A549 (cell line): ENCODE measurements at regions of chr11 and their contacts with region 1.

Region 1: DNA sequence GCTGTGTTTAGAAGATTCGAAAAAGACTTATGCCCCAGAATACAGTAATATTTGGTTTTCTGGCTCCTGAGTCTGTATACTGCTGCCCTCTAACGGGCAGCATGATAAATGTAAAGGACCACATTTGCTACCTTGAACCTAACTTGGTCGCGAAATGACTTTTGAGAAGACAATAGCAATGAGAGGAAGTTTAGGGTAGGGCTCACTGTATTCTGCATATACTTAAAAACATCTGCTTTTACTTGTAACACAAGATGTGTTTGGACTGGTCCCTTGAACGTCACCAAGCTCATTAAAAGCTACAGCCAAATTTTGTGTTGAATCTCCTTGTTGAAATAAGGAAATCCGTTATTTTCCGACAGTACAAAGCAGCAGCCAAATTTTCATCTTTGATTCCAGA is 309.1 kb downstream of the SWAP70 start:
- DNase-seq: peak; percentile 63
- ATAC-seq: peak; percentile 56 to 73; a peak in 4 of 6 replicates
- H3K4me3 ChIP-seq: no peak overlapping the region
- H3K27ac ChIP-seq: peak overlapping the region; percentile 12 to 56; a peak in 3 of 6 replicates
- H3K4me1 ChIP-seq: peaks cover 39% of the 10 kb centered on the region
- CTCF ChIP-seq: peak; percentile 89
- EP300 ChIP-seq: no peak
- POLR2A ChIP-seq: no peak
- RAD21 ChIP-seq: peak; percentile 89 to 91

Region 2: GRCh38 chr11:9765320-9766020 is 207.5 kb before region 1 on chr11:
- CTCF ChIA-PET with region 1: interaction called, 53 read pairs
- POLR2A ChIA-PET with region 1: no interaction called
- DNase-seq: no peak
- ATAC-seq: peak in 1 of 2 experiments; percentile 21; a peak in 2 of 6 replicates
- H3K4me3 ChIP-seq: no peak overlapping the region
- H3K27ac ChIP-seq: peak overlapping the region in 1 of 2 experiments; percentile 63; a peak in 3 of 6 replicates
- H3K4me1 ChIP-seq: peaks cover 8% of the 10 kb centered on the region
- CTCF ChIP-seq: no peak
- EP300 ChIP-seq: no peak
- POLR2A ChIP-seq: no peak
- RAD21 ChIP-seq: no peak

Region 3: DNA sequence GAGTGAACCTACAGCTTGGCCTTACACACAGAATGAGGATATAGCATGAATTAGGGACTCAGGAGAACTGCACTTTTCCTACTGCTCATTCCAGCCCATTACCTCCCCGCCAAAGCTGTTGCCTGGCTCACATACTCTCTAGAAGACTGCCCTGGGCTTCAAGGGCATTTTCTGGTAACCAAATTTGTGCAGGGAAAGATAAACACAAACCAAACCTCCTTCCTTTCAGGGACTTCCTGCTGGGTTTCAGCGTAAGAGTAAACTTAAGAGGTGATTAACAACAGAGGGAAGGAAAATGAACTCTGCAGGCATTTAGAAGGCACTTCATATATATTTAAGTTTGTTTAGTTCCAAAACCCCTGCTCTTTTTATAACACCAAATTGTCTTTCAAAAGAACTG is 114.2 kb before region 1 on chr11:
- CTCF ChIA-PET with region 1: interaction called, 24 read pairs
- POLR2A ChIA-PET with region 1: no interaction called
- DNase-seq: peak in 1 of 2 experiments; percentile 32
- ATAC-seq: peak in 1 of 2 experiments; percentile 59; a peak in 3 of 6 replicates
- H3K4me3 ChIP-seq: no peak overlapping the region
- H3K27ac ChIP-seq: peak overlapping the region; percentile 60 to 85
- H3K4me1 ChIP-seq: peaks cover 73% of the 10 kb centered on the region
- CTCF ChIP-seq: no peak
- EP300 ChIP-seq: no peak
- POLR2A ChIP-seq: no peak
- RAD21 ChIP-seq: no peak

Region 4: DNA sequence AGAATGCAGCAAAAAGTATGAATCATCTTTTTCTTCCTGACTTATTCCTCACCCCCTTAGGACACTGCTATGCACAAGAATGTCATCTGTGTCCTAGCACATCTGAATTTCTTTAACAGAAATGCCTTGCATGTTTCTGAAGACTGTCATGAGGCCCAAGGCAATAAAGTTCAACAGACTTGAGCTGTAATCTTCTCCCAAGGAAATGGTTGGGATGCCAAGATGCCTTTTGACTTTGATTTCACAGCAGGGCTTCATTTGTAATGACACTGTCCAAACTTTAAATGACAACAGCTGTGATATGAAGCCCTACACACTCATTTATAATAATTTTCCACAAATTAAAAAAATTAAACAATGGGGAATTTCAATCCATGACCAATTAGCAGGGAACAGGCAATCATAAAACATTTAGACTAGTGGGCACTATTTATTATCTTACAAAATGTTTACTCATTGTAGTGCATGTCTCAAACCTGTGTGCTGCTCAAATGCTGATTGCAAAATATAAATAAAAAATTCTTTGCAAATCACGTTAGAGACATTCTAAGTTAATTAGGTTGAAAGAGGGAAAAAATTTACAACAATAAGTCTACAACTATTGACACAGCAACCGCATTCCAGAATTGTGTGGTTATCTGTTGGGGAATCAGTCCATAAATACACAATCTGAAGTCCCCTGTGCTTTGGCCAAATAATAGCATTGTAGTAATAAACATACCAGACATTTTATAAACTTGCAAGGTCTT is 66.8 kb before region 1 on chr11:
- CTCF ChIA-PET with region 1: interaction called, 16 read pairs
- POLR2A ChIA-PET with region 1: interaction called, 3 read pairs
- DNase-seq: peak; percentile 80 to 96
- ATAC-seq: peak; percentile 97 to 98
- H3K4me3 ChIP-seq: 0 out of 3 replicates have a peak overlapping the region, but pooled peaks have one; percentile 5
- H3K27ac ChIP-seq: peak overlapping the region; percentile 81 to 92
- H3K4me1 ChIP-seq: peaks cover 50% of the 10 kb centered on the region
- CTCF ChIP-seq: no peak
- EP300 ChIP-seq: peak; percentile 78 to 93; a peak in 4 of 5 replicates
- POLR2A ChIP-seq: no peak
- RAD21 ChIP-seq: peak; percentile 31 to 42; a peak in 3 of 5 replicates

Region 5: GRCh38 chr11:9951714-9952275 is 21.2 kb before region 1 on chr11:
- CTCF ChIA-PET with region 1: interaction called, 10 read pairs
- POLR2A ChIA-PET with region 1: no interaction called
- DNase-seq: no peak
- ATAC-seq: no peak
- H3K4me3 ChIP-seq: no peak overlapping the region
- H3K27ac ChIP-seq: peak overlapping the region in 1 of 2 experiments; percentile 25; a peak in 2 of 6 replicates
- H3K4me1 ChIP-seq: peaks cover 17% of the 10 kb centered on the region
- CTCF ChIP-seq: no peak
- EP300 ChIP-seq: no peak
- POLR2A ChIP-seq: no peak
- RAD21 ChIP-seq: no peak

Region 6: GRCh38 chr11:9962722-9963121 is 10.3 kb before region 1 on chr11:
- CTCF ChIA-PET with region 1: interaction called, 13 read pairs
- POLR2A ChIA-PET with region 1: no interaction called
- DNase-seq: no peak
- ATAC-seq: no peak
- H3K4me3 ChIP-seq: no peak overlapping the region
- H3K27ac ChIP-seq: no peak overlapping the region; a peak in 1 of 6 replicates
- H3K4me1 ChIP-seq: no peaks in the 10 kb centered on the region
- CTCF ChIP-seq: no peak
- EP300 ChIP-seq: no peak
- POLR2A ChIP-seq: no peak
- RAD21 ChIP-seq: no peak

Region 7: DNA sequence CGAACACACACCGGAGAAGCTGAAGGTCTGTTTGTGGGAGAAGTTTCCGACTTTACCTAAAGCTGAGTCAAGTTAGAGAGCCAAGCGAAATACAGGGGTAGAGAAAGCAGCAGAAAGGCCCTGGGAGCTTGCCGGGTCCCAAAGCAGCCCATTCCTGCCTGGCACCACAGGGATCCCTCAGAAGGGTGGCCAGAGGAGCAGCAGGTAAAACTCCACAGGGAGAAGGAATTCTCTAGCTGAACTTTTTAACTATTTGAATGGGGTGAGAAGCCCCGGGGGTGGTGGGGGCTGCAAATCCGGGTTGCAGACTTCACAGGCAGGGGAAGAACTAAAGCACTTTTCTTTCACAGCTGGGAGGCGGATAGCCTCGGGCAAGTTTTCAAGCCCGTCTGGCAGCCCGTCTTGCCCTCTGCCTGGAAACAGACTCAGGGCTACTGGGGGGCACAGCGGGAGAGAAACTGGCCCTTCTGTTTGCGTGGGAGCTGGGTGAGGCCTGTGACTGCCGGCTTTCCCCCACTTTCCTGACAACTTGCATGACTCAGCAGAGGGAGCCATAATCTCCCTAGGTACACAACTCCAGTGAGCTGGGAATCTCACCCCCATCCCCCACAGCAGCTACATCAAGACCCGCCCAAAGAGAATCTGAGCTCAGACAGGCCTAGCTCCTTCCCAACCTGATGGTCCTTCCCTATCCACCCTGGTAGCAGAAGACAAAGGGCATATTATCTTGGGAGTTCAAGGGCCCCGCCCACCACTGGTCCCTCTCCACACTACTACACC is 10.0 kb after region 1 on chr11:
- CTCF ChIA-PET with region 1: interaction called, 39 read pairs
- POLR2A ChIA-PET with region 1: no interaction called
- DNase-seq: peak; percentile 32 to 97
- ATAC-seq: peak; percentile 83 to 91
- H3K4me3 ChIP-seq: peak overlapping the region; percentile 19; the same call in 1 of the 3 replicates
- H3K27ac ChIP-seq: peak overlapping the region; percentile 95
- H3K4me1 ChIP-seq: peaks cover 37% of the 10 kb centered on the region
- CTCF ChIP-seq: no peak
- EP300 ChIP-seq: peak in 1 of 2 experiments; percentile 77; a peak in 3 of 5 replicates
- POLR2A ChIP-seq: no peak
- RAD21 ChIP-seq: peak; percentile 33 to 55; a peak in 4 of 5 replicates

Region 8: DNA sequence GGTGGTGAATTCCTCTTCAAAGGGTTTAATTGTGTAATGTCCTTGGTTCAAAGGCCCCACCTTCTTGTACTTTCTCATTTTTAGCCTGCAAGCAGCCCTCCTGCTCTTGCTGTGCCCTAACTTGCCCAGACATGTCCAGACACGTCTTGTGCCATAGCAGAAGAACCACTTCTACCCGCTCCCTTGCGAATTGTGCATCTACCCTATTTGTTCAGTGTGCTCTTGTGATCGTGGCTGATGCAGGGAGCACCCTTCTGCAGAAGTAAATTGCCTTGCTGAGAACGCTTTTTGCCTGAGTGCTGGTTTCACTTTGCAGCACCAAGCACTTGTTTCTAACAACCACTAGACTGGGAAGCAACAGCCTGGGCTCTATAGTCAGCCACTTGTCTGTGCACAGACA is 71.6 kb after region 1 on chr11:
- CTCF ChIA-PET with region 1: no interaction called
- POLR2A ChIA-PET with region 1: no interaction called
- DNase-seq: peak in 1 of 2 experiments; percentile 72
- ATAC-seq: no peak
- H3K4me3 ChIP-seq: no peak overlapping the region
- H3K27ac ChIP-seq: peak overlapping the region in 1 of 2 experiments; percentile 50; a peak in 2 of 6 replicates
- H3K4me1 ChIP-seq: no peaks in the 10 kb centered on the region
- CTCF ChIP-seq: no peak
- EP300 ChIP-seq: no peak
- POLR2A ChIP-seq: no peak
- RAD21 ChIP-seq: no peak